Aorta (tissue), 5 donors: ENCODE measurements at regions of chr17 and their contacts with region 1.

Region 1: DNA sequence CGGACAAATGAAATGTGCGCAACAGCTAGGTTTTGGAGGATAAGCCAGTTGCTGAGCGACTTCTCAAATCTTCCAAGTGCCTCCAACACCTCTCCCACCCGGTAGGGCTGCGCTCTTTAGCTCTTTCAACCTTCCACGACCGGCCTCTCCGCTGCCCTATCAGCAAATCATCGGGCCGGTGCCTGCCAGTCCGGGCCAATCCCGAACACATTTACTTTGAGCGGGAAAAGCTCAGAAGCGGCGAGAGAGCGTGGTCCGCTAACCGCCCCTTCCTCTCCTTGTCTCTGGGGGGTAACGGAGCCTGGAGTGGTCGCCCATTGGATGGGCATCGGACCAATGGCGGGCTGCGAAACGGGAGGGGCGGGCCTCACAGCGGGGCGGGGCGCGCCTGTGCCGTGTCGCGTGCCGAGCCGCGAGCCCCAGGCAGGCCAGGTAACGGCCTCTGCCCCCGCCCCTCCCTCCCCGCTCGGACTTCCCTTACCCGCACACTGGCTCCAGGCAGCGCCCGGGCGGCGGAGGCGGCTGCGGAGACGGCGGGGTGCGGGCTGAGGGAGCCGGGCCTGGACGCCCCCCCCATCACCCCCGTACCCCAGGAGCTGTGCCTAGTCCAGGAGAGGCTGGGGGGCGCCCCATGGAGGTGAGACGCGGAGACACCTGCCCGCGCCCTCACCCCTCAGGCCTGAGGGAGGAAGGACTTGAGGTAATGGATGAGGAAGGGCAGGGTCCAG is at the start of gene MEIOC:
- DNase-seq: no peak
- ATAC-seq: no peak
- H3K4me3 ChIP-seq: no peak within 1 kb of the TSS
- H3K27ac ChIP-seq: no peak within 1 kb of the TSS
- H3K4me1 ChIP-seq: no peaks in the 10 kb centered on the region
- H3K27me3 ChIP-seq: no peaks in the 10 kb centered on the region
- total RNA-seq, gene MEIOC: not detected

Region 2: GRCh38 chr17:44385287-44386181 is 270.6 kb before region 1 on chr17:
- intact Hi-C with region 1: loop called in 1 of 2 experiments (anchors 10 kb)
- DNase-seq: peak; percentile 84 to 94
- ATAC-seq: peak; percentile 93
- H3K4me3 ChIP-seq: peak overlapping the region; percentile 10 to 21
- H3K27ac ChIP-seq: no peak overlapping the region
- H3K4me1 ChIP-seq: no peaks in the 10 kb centered on the region
- H3K27me3 ChIP-seq: no peaks in the 10 kb centered on the region

Region 3: DNA sequence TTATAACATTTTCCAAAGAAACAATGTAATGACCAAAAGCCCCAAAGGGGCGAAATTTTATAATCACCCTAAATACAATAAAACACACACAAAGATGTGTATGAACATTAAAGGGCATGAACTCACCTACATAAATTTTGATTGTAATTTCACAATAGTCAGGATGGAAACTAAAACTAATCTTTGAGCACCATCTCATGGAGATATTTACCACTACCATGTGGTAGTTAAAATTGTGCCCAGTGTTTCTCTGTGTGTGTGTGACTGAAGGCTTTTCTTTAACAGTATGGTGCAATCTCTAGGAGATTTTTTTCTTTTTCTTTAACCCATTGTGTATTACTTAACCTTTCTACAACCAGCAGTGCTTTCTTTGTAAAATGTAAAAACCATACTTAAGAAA is 19.6 kb before region 1 on chr17:
- intact Hi-C with region 1: no loop called
- DNase-seq: no peak
- ATAC-seq: peak; percentile 72
- H3K4me3 ChIP-seq: no peak overlapping the region
- H3K27ac ChIP-seq: no peak overlapping the region
- H3K4me1 ChIP-seq: no peaks in the 10 kb centered on the region
- H3K27me3 ChIP-seq: no peaks in the 10 kb centered on the region

Region 4: DNA sequence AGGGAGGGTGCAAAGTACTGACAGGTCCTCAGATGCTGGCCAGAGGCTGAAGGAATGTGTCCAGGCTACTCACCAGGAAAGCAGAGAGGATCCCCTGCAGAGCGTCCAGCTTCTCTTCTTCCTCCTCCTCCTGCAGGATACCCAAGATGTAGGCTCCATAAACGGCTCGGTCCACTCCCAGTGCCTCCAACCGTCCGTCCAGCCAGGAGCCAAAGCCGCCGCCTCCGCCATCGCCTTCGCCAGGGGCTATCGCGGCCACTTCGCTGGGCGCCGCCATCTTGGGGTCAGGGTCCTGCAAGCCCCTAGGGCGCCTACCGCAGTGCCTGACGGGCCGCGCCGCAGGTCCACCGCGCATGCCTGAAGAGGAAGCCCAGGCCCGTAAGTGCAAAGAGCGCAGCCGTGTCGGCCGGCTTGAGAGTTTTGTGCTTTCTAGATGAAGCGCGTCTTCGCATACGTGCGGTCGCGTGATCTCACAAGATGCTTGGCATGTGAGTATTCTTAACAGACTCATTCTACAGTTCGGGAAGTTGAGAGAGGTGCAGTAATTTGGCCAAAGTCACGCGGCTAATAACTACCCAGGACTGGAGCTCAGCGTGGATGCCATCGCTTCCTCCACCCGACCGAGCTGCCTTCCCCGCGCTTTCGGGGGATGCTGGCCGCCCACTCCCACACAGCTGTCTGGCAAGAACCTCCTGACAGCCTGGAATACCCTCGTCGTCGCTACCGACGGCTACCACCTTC is 33.5 kb after region 1 on chr17 and contains the start of gene CCDC43:
- intact Hi-C with region 1: no loop called
- DNase-seq: peak; percentile 92 to 97
- ATAC-seq: peak; percentile 98
- H3K4me3 ChIP-seq: peak within 1 kb of the TSS; percentile 72 to 83
- H3K27ac ChIP-seq: peak within 1 kb of the TSS in 1 of 2 donors; percentile 91
- H3K4me1 ChIP-seq: no peaks in the 10 kb centered on the region
- H3K27me3 ChIP-seq: no peaks in the 10 kb centered on the region
- total RNA-seq, gene CCDC43: 15.4 to 16.1 TPM

Region 5: DNA sequence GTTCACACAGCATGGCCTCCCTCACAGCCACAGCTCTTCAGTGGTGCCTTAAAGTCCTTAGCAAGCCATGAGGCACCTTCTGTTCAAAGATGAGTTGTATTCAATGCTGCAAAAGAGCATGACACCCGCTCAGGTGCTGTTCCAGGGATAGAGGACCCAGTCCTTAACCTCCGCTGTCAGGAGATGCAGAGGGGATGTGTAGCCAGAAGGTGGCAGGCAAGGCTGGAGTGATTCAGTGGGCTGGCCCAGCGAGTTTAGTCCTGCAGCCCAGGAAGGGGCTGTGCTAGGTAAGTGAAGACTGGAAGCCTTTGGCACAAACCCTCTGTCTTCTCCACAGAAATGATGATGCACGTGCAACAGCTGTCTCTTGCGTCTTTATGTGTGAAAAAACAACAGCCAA is 77.6 kb after region 1 on chr17:
- intact Hi-C with region 1: no loop called
- DNase-seq: no peak
- ATAC-seq: no peak
- H3K4me3 ChIP-seq: no peak overlapping the region
- H3K27ac ChIP-seq: no peak overlapping the region
- H3K4me1 ChIP-seq: no peaks in the 10 kb centered on the region
- H3K27me3 ChIP-seq: no peaks in the 10 kb centered on the region